ENCODE measurements at regions of chr7 and their contacts with region 1.

Region 1: GRCh38 chr7:39623018-39623731 is at the start of gene RALA:
- DNase-seq: peak; percentile 78 to 90 (median 86)
- ATAC-seq: peak; percentile 96
- H3K4me3 ChIP-seq: peak within 1 kb of the TSS; percentile 77
- H3K4me3 Mint-ChIP-seq: peak within 1 kb of the TSS; percentile 88 to 98 (median 94)
- H3K27ac ChIP-seq: peak within 1 kb of the TSS; percentile 82
- H3K27ac Mint-ChIP-seq: peak within 1 kb of the TSS; percentile 91 to 98 (median 97)
- H3K4me1 ChIP-seq: peaks cover 22 to 26% of the 10 kb centered on the region in 2 donors
- H3K4me1 Mint-ChIP-seq: peaks cover 39 to 55% (median 52%) of the 10 kb centered on the region in 7 donors
- H3K27me3 ChIP-seq: no peaks in the 10 kb centered on the region
- H3K27me3 Mint-ChIP-seq: peaks cover 0 to 6% (median 0%) of the 10 kb centered on the region in 5 donors
- total RNA-seq, gene RALA: 24.8 to 48.2 (median 32.8) TPM

Region 2: GRCh38 chr7:38178004-38178694 is 1445.0 kb before region 1 on chr7 and contains the start of gene STARD3NL:
- CTCF ChIA-PET with region 1: no interaction called
- POLR2A ChIA-PET with region 1: no interaction called
- intact Hi-C with region 1: loop called in 1 of 2 experiments (anchors 1 kb)
- DNase-seq: peak; percentile 68 to 97 (median 88)
- ATAC-seq: peak; percentile 97
- H3K4me3 ChIP-seq: peak within 1 kb of the TSS; percentile 96
- H3K4me3 Mint-ChIP-seq: peak within 1 kb of the TSS; percentile 94 to 100 (median 99)
- H3K27ac ChIP-seq: peak within 1 kb of the TSS; percentile 84
- H3K27ac Mint-ChIP-seq: peak within 1 kb of the TSS; percentile 66 to 98 (median 97)
- H3K4me1 ChIP-seq: peaks cover 17 to 23% of the 10 kb centered on the region in 2 donors
- H3K4me1 Mint-ChIP-seq: peaks cover 21 to 50% (median 45%) of the 10 kb centered on the region in 7 donors
- H3K27me3 ChIP-seq: no peaks in the 10 kb centered on the region
- H3K27me3 Mint-ChIP-seq: peaks cover 3 to 14% (median 10%) of the 10 kb centered on the region in 5 donors
- total RNA-seq, gene STARD3NL: 9.4 to 22.0 (median 12.2) TPM

Region 3: DNA sequence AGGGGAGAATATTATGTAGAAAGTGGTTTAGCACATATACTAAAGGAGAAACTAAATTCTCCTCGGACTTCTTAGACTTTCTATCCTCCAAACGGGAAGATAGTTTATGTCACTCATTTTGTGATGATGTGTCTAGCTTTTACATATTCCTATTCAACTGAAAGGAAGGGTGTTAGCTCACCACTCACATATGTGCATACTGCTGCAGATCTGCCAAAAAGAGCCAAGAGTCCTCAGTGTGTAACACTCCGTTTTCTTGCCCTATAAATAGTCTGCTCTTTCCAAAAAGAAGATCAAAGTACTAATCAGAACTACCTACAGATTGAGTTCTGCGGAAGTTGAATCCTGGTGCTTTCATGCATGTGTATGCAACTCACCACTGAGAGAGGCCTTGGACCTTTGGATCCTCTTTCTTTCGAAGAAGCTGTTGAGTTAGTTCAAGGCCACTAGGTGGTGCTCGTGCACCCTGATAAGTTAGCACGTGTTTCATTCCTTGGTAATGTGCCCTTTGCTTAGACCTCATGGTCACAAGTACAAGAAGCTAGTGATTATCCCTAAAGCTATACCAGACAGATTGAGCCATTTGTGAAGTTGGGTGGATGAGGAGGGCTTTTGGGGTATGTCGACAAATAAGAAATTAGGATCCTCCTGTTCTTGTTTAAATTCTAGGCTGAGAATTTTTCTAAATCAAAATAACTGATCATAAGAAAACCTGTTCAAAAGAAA is 42.9 kb before region 1 on chr7:
- CTCF ChIA-PET with region 1: interaction called, 19 read pairs
- POLR2A ChIA-PET with region 1: interaction called, 9 read pairs
- intact Hi-C with region 1: loop called (anchors 1 kb)
- DNase-seq: peak; percentile 38 to 79 (median 73)
- ATAC-seq: peak; percentile 98
- H3K4me3 ChIP-seq: no peak overlapping the region
- H3K4me3 Mint-ChIP-seq: no peak overlapping the region
- H3K27ac ChIP-seq: no peak overlapping the region
- H3K27ac Mint-ChIP-seq: peak overlapping the region in 5 of 9 donors; percentile 23 to 61 (median 44)
- H3K4me1 ChIP-seq: no peaks in the 10 kb centered on the region
- H3K4me1 Mint-ChIP-seq: peaks cover 2 to 12% (median 10%) of the 10 kb centered on the region in 7 donors
- H3K27me3 ChIP-seq: no peaks in the 10 kb centered on the region
- H3K27me3 Mint-ChIP-seq: no peaks in the 10 kb centered on the region

Region 4: GRCh38 chr7:39633563-39634477 is 10.6 kb after region 1 on chr7:
- CTCF ChIA-PET with region 1: no interaction called
- POLR2A ChIA-PET with region 1: interaction called, 23 read pairs
- intact Hi-C with region 1: loop called (anchors 1 kb)
- DNase-seq: peak in 7 of 9 donors; percentile 53 to 76 (median 68)
- ATAC-seq: peak; percentile 93
- H3K4me3 ChIP-seq: peak overlapping the region; percentile 37
- H3K4me3 Mint-ChIP-seq: peak overlapping the region; percentile 71 to 92 (median 82)
- H3K27ac ChIP-seq: peak overlapping the region; percentile 79
- H3K27ac Mint-ChIP-seq: peak overlapping the region; percentile 92 to 99 (median 98)
- H3K4me1 ChIP-seq: peaks cover 18 to 29% of the 10 kb centered on the region in 2 donors
- H3K4me1 Mint-ChIP-seq: peaks cover 53 to 93% (median 72%) of the 10 kb centered on the region in 7 donors
- H3K27me3 ChIP-seq: no peaks in the 10 kb centered on the region
- H3K27me3 Mint-ChIP-seq: no peaks in the 10 kb centered on the region

Region 5: DNA sequence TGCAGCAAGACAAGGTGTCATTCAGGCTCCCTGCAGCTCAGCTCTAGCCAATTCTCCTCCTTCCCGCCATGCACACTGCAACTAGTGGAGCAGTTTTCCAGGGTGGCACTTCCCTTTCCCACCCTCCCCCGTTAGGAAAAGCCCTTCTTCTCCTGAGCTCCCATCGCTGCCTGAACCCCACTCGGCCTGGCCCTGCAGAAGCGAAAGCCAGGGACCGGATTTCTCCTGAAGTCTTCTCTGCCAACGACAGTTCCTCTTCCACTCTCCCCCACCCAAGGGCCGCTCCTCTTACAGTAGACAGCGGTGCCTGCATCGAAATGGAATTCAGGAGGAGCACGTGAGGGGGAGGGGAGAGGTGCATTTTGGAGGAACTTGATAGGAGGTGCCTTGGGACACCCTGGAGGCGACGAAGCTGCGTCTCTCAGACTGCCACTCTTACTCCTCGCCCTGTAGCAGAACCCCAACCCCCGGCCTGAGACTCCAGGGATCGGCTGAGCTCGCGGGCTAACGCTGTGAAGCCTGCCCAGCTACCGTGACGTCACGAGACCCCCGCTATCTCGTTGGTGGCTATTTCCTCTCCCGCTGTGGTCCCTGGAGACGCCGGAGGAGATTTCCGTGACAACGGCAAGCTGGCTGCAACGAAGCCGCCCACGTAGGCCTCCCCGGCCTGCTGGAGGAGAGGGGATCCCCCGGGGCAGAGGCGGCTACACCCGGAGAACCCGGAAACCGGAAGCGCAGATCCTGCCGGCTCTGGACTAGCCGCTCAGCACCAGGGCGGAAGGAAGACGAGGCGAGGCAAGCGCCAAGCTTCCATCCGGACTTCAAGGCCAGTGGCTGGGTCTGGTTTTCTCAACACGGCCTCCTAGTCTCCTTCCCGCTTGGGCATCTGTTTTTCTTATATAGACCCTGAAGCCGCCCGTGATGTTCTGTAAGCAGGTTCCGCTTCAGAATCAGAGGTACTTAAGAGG is 109.9 kb after region 1 on chr7:
- CTCF ChIA-PET with region 1: no interaction called
- POLR2A ChIA-PET with region 1: interaction called, 50 read pairs
- intact Hi-C with region 1: loop called (anchors 1 kb)
- DNase-seq: peak; percentile 80 to 96 (median 91)
- ATAC-seq: peak; percentile 95
- H3K4me3 ChIP-seq: peak overlapping the region; percentile 83
- H3K4me3 Mint-ChIP-seq: peak overlapping the region; percentile 78 to 95 (median 92)
- H3K27ac ChIP-seq: peak overlapping the region; percentile 82
- H3K27ac Mint-ChIP-seq: peak overlapping the region; percentile 93 to 98 (median 96)
- H3K4me1 ChIP-seq: peaks cover 11 to 27% of the 10 kb centered on the region in 2 donors
- H3K4me1 Mint-ChIP-seq: peaks cover 13 to 46% (median 40%) of the 10 kb centered on the region in 7 donors
- H3K27me3 ChIP-seq: no peaks in the 10 kb centered on the region
- H3K27me3 Mint-ChIP-seq: peaks cover 0 to 9% (median 0%) of the 10 kb centered on the region in 5 donors

Region 6: GRCh38 chr7:40134428-40135316 is 511.5 kb after region 1 on chr7 and contains the starts of genes MPLKIP and SUGCT:
- CTCF ChIA-PET with region 1: no interaction called
- POLR2A ChIA-PET with region 1: interaction called, 5 read pairs
- intact Hi-C with region 1: loop called (anchors 1 kb)
- DNase-seq: peak; percentile 81 to 95 (median 91)
- ATAC-seq: peak; percentile 97
- H3K4me3 ChIP-seq: peak within 1 kb of the TSS; percentile 100
- H3K4me3 Mint-ChIP-seq: peak within 1 kb of the TSS; percentile 86 to 99 (median 97)
- H3K27ac ChIP-seq: peak within 1 kb of the TSS; percentile 92
- H3K27ac Mint-ChIP-seq: peak within 1 kb of the TSS; percentile 92 to 98 (median 97)
- H3K4me1 ChIP-seq: peaks cover 21 to 31% of the 10 kb centered on the region in 2 donors
- H3K4me1 Mint-ChIP-seq: peaks cover 15 to 44% (median 31%) of the 10 kb centered on the region in 7 donors
- H3K27me3 ChIP-seq: no peaks in the 10 kb centered on the region
- H3K27me3 Mint-ChIP-seq: peaks cover 0 to 17% (median 0%) of the 10 kb centered on the region in 5 donors
- total RNA-seq, gene MPLKIP: 17.2 to 40.1 (median 33.5) TPM
- total RNA-seq, gene SUGCT: 2.2 to 2.7 (median 2.4) TPM in 4 of 5 experiments, not detected in the other

Measured in naive thymus-derived CD4-positive, alpha-beta T cell (primary cell).